ENCODE measurements at regions of chr7 and their contacts with region 1.

Region 1: DNA sequence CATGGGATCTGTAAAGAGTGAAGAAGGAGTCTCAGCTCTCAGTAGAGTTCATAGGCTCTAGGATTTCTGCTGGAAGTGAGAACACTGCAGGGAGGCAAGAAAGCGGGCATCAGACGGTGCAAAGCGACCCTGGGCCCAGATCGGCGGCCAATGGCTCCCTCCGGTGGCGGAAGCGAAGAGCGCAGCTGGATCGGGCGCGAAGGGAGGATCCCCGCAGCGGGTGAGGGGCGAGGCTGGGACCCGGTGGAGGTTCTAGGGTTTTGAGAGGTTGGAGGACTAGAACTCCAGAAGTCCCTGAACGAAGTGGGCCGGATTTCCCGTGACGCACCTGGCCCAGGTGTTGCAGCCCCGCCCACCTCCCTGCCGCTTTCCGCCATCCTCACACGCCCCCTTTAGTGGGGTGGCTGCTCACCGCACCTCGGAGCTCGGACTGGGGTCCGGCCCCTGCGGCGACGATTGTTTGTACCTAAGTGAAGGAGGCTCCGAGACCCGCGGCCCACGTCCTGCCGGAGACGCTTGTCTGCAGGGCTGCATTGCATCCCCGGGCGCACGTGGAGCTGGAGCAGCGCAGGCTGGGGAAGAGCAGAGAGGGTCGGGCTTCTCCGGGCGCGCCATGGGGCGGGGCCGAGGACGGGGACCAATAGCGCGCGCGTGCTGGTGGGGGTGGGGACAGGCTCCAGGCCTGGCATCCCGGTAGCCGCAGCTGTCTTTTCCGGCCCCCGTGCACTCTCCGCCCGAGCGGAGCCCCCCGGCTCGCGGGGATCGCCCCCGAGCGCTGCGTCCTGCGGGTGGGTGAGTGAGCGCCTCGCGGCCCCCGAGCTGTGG is at the start of gene SLC12A9:
- DNase-seq: peak; percentile 91
- ATAC-seq: peak; percentile 99
- H3K4me3 Mint-ChIP-seq: peak within 1 kb of the TSS; percentile 89
- H3K27ac Mint-ChIP-seq: peak within 1 kb of the TSS; percentile 80
- H3K4me1 Mint-ChIP-seq: peaks cover 23% of the 10 kb centered on the region
- H3K27me3 Mint-ChIP-seq: no peaks in the 10 kb centered on the region
- total RNA-seq, gene SLC12A9: 28.3 to 29.5 TPM

Region 2: DNA sequence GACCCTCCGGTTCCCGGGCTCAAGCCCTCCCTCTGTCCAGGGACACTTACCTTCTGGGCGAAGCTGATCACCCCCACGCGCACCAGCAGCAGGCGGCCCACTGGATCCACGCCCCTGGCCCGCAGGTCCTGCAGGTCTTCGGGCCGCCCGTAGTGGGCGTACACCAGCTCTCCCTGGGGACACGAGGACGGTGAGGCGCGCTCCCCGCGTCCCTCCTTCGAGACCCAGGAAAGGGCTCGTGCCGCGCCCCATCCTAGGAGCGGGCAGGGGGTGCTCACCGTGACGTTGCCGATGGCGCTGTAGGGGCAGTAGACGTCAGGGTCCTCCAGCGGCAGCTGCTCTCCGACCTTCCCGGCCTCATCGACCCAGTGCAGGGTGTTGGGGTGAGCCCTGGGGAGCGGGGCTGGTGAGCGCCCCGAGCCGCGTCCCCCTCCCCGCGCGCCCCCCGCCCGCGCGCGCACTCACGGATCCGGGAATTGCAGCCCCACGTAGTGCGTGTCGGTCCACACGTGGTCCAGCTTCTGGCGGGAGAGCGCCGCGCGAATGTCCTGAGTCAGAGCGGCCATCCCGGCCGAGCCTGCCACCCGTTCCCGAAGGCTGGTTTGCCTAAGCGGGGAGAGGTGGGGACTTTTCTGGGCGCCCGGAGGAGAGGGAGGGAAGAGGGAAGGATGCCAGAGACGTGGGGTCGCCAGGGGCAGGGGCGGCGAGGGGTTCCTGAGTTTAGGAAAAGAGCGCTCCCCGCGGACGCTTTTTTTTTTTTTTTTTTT is 219.1 kb before region 1 on chr7:
- CTCF ChIA-PET with region 1: interaction called, 10 read pairs
- POLR2A ChIA-PET with region 1: no interaction called
- DNase-seq: peak; percentile 68
- ATAC-seq: peak; percentile 69
- H3K4me3 Mint-ChIP-seq: peak overlapping the region; percentile 83
- H3K27ac Mint-ChIP-seq: peak overlapping the region; percentile 88
- H3K4me1 Mint-ChIP-seq: peaks cover 46% of the 10 kb centered on the region
- H3K27me3 Mint-ChIP-seq: peaks cover 5% of the 10 kb centered on the region

Region 3: GRCh38 chr7:100803398-100804233 is 48.6 kb before region 1 on chr7:
- CTCF ChIA-PET with region 1: interaction called, 223 read pairs
- POLR2A ChIA-PET with region 1: interaction called, 4 read pairs
- DNase-seq: peak; percentile 63
- ATAC-seq: peak; percentile 74
- H3K4me3 Mint-ChIP-seq: no peak overlapping the region
- H3K27ac Mint-ChIP-seq: no peak overlapping the region
- H3K4me1 Mint-ChIP-seq: peaks cover 13% of the 10 kb centered on the region
- H3K27me3 Mint-ChIP-seq: no peaks in the 10 kb centered on the region

Region 4: DNA sequence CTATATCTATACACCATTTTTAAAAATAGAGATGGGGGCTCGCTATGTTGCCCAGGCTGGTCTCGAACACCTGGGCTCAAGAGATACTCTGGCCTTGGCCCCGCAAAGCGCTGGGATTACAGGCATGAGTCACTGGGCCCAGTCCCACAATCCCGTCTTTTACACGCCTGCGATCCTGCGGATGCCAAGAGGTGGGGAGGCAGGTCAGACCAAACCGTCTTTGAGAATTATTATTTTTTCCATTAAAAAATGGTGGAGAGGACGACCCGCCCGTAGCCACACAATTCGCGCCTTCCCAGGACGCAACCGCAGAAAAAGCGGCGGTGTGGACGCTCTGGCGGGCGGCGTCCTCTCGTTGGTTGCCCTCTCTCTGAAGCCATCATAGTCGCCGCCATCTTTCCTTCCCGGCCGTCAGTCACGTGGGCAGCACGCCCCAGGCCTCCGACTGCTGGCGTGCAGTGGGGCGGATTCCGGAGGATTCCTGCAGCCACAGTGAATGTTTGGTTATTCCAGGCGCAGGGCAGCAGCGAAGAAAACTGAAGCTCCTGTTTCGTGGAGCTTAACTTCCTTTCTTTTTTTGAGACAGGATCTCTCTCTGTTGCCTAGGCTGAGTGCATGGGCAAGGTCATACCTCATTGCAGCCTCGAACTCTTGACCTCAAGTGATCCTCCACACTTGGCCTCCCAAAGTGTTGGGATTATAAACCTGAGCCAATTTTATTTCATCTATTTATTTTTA is 15.0 kb before region 1 on chr7:
- CTCF ChIA-PET with region 1: interaction called, 14 read pairs
- POLR2A ChIA-PET with region 1: no interaction called
- DNase-seq: peak; percentile 73
- ATAC-seq: peak; percentile 92
- H3K4me3 Mint-ChIP-seq: peak overlapping the region; percentile 70
- H3K27ac Mint-ChIP-seq: peak overlapping the region; percentile 70
- H3K4me1 Mint-ChIP-seq: peaks cover 16% of the 10 kb centered on the region
- H3K27me3 Mint-ChIP-seq: peaks cover 3% of the 10 kb centered on the region

Region 5: DNA sequence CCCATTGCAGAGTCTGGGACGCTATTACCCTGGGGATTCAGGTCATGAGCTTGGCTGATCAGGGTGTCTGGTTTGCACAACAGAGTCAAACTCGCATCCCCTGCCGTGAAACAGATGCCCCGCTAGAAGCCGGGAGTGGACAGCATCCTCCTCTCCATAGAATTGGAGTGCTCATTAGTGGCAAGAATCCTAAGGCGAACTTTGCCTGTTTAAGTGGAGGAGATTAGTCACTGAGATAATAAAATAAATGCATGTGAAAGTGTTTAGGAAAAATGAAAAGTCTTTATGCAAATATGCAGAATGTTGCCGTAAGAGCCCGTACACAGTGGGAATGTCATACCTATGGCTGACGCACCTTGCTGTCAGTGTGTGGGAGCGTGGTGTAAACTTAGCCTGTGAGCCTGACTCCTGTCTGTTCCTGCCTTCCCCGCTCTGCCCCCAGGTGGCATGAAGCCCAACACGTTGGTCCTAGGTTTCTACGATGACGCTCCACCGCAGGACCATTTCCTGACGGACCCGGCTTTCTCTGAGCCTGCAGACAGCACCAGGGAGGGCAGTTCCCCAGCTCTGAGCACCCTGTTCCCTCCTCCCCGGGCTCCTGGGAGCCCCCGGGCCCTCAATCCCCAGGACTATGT is 13.1 kb after region 1 on chr7:
- CTCF ChIA-PET with region 1: interaction called, 11 read pairs
- POLR2A ChIA-PET with region 1: no interaction called
- DNase-seq: no peak
- ATAC-seq: no peak
- H3K4me3 Mint-ChIP-seq: no peak overlapping the region
- H3K27ac Mint-ChIP-seq: no peak overlapping the region
- H3K4me1 Mint-ChIP-seq: peaks cover 19% of the 10 kb centered on the region
- H3K27me3 Mint-ChIP-seq: no peaks in the 10 kb centered on the region

Region 6: GRCh38 chr7:100874577-100875355 is 22.5 kb after region 1 on chr7 and contains the start of gene SRRT:
- CTCF ChIA-PET with region 1: interaction called, 12 read pairs
- POLR2A ChIA-PET with region 1: interaction called, 22 read pairs
- DNase-seq: peak; percentile 99
- ATAC-seq: peak; percentile 93
- H3K4me3 Mint-ChIP-seq: peak within 1 kb of the TSS; percentile 99
- H3K27ac Mint-ChIP-seq: peak within 1 kb of the TSS; percentile 99
- H3K4me1 Mint-ChIP-seq: peaks cover 55% of the 10 kb centered on the region
- H3K27me3 Mint-ChIP-seq: no peaks in the 10 kb centered on the region
- total RNA-seq, gene SRRT: 273 to 292 TPM

Region 7: DNA sequence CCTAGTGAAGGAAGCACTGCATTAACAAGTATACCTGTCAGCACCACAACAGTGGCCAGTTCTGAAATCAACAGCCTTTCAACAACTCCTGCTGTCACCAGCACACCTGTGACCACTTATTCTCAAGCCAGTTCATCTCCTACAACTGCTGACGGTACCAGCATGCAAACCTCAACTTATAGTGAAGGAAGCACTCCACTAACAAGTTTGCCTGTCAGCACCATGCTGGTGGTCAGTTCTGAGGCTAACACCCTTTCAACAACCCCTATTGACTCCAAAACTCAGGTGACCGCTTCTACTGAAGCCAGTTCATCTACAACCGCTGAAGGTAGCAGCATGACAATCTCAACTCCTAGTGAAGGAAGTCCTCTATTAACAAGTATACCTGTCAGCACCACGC is 183.7 kb after region 1 on chr7:
- CTCF ChIA-PET with region 1: no interaction called
- POLR2A ChIA-PET with region 1: no interaction called
- DNase-seq: no peak
- ATAC-seq: no peak
- H3K4me3 Mint-ChIP-seq: no peak overlapping the region
- H3K27ac Mint-ChIP-seq: no peak overlapping the region
- H3K4me1 Mint-ChIP-seq: no peaks in the 10 kb centered on the region
- H3K27me3 Mint-ChIP-seq: peaks cover 3% of the 10 kb centered on the region